CD8-positive, alpha-beta T cell (primary cell): ENCODE measurements at regions of chr6 and their contacts with region 1.

Region 1: DNA sequence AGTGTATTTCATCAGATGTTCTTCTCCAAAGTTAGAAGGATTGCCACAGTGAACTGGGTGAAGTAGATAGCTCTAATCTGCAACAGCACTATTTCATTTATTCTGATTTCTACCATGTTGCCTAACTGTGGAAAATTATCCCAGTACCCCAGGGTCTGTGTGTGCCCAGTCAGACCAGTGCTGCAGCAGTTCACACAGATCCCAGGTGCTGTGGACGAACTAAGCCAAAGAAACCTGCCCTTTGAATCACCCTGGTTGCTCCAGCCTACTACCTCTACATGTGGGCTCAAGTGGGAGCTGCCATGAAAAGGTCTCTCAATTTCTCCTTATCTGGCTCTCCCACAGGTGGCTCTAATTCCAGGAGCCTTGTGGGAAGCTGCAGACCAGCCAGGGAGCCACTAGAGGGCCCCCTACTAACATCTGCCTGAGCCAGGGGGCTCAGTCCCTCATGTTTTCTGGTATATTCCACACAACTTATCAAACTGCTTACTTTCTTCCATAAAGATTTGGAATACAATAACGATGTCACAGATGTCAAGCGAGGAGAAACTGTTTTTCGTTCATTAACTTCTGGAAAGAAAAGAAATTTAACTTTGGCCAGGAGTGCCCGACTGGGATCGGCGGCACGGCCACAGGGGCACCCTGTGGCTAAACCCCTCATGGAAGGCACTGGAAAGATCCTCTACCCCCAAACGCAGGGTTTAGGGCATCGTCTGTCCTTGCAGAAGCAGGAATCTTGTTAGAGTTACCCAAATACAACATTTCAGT is 31.6 kb upstream of the LY86 start:
- DNase-seq: peak in 7 of 9 experiments; percentile 21 to 72 (median 51)
- ATAC-seq: peak; percentile 62
- H3K4me3 ChIP-seq: no peak overlapping the region
- H3K4me3 Mint-ChIP-seq: no peak overlapping the region
- H3K27ac ChIP-seq: no peak overlapping the region
- H3K27ac Mint-ChIP-seq: no peak overlapping the region
- H3K4me1 ChIP-seq: no peaks in the 10 kb centered on the region
- H3K4me1 Mint-ChIP-seq: peaks cover 1% of the 10 kb centered on the region
- H3K27me3 ChIP-seq: no peaks in the 10 kb centered on the region
- H3K27me3 Mint-ChIP-seq: no peaks in the 10 kb centered on the region
- CTCF ChIP-seq: peak; percentile 89

Region 2: DNA sequence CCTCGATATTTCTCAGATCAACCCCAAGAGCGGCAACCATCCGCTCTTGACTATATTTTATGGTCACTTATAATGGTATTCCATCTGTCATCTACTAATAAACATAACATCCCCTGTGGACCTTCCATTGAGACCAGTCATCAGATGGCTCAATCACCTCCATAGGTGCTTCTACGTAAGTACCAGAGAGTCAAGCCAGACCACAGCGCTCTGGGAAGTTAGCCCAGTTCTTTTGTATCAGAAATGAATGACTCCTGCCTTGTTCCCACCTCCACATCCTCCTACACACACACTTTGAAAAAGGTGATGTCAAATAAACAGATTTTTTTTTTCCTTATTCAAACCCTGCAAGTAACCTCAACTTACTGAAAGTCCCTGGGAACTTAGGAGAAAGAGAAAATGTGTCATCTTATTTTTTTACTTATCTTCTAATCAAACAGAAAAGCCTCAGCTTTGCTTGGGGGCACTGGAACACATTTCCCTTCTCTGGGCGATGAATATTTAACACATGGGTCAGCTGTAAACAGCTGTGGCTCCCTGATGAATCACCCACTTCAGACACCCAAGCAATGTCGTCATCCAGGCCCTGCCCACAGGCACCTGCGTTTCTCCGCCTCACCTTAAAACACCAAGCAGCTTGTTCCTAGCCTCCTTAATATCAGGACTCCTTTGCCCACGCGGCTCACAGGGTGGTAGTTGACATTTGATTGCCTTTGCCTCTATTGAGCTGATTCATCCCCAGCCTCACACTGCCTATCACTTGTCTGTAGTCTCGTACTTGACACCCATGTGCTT is 89.8 kb before region 1 on chr6:
- CTCF ChIA-PET with region 1: no interaction called
- POLR2A ChIA-PET with region 1: no interaction called
- intact Hi-C with region 1: no loop called
- DNase-seq: no peak
- ATAC-seq: no peak
- H3K4me3 ChIP-seq: no peak overlapping the region
- H3K4me3 Mint-ChIP-seq: no peak overlapping the region
- H3K27ac ChIP-seq: no peak overlapping the region
- H3K27ac Mint-ChIP-seq: no peak overlapping the region
- H3K4me1 ChIP-seq: no peaks in the 10 kb centered on the region
- H3K4me1 Mint-ChIP-seq: no peaks in the 10 kb centered on the region
- H3K27me3 ChIP-seq: no peaks in the 10 kb centered on the region
- H3K27me3 Mint-ChIP-seq: peaks cover 3% of the 10 kb centered on the region
- CTCF ChIP-seq: no peak

Region 3: GRCh38 chr6:6509284-6509683 is 47.6 kb before region 1 on chr6:
- CTCF ChIA-PET with region 1: no interaction called
- POLR2A ChIA-PET with region 1: no interaction called
- intact Hi-C with region 1: no loop called
- DNase-seq: no peak
- ATAC-seq: no peak
- H3K4me3 ChIP-seq: no peak overlapping the region
- H3K4me3 Mint-ChIP-seq: no peak overlapping the region
- H3K27ac ChIP-seq: no peak overlapping the region
- H3K27ac Mint-ChIP-seq: no peak overlapping the region
- H3K4me1 ChIP-seq: no peaks in the 10 kb centered on the region
- H3K4me1 Mint-ChIP-seq: peaks cover 8% of the 10 kb centered on the region
- H3K27me3 ChIP-seq: no peaks in the 10 kb centered on the region
- H3K27me3 Mint-ChIP-seq: peaks cover 16% of the 10 kb centered on the region
- CTCF ChIP-seq: no peak

Region 4: DNA sequence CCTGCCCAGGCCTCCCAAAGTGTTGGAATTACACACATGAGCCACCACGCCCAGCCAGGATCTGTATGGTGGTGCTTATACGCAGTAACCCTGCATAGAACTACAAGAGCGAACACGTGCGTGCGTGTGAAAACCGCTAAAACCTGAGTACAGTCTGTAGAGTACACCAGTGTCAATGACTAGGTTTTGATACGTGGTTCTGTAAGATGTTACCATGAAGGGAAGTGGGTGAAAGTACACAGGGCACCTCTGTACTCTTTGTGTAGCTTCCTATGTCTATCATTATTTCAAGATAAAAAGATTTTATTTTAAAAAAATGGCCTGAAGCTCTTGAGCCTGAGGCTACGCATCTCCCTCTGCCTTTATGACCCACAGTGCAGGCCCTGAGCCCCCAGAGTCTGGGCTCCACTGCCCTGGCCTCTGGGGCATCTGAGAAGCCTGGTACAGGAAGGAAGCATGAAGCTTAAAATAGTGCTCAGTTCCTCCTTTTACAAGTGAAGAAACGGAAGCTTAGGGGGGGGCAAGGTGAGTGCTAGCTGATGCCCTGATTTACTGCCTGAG is 53.2 kb after region 1 on chr6:
- CTCF ChIA-PET with region 1: no interaction called
- POLR2A ChIA-PET with region 1: no interaction called
- intact Hi-C with region 1: loop called in 1 of 2 experiments (anchors 5 kb)
- DNase-seq: peak in 7 of 9 experiments; percentile 26 to 86 (median 64)
- ATAC-seq: peak; percentile 69
- H3K4me3 ChIP-seq: peak overlapping the region in 1 of 2 experiments; percentile 3
- H3K4me3 Mint-ChIP-seq: peak overlapping the region; percentile 27
- H3K27ac ChIP-seq: peak overlapping the region; percentile 55 to 70
- H3K27ac Mint-ChIP-seq: peak overlapping the region; percentile 96
- H3K4me1 ChIP-seq: peaks cover 67% of the 10 kb centered on the region
- H3K4me1 Mint-ChIP-seq: peaks cover 69% of the 10 kb centered on the region
- H3K27me3 ChIP-seq: no peaks in the 10 kb centered on the region
- H3K27me3 Mint-ChIP-seq: no peaks in the 10 kb centered on the region
- CTCF ChIP-seq: no peak

Region 5: DNA sequence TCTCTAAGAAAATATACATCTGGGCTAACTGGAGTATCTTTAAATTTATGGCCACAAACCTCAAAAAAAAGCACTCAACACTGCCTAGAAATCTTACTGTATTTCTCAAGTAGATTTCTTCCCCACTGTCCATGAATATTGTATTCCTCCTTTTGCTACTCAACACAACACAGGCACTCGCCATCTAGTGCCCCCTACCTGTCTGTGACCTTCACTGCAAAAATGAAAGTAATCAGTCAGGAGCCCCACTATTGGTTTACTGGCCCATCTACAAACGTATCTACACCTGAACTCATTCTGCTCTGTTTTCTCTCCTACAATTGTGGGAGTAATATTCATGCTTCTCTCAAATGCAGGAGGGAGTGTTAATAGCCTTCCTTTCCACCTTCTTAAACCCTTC is 89.9 kb after region 1 on chr6:
- CTCF ChIA-PET with region 1: interaction called, 5 read pairs
- POLR2A ChIA-PET with region 1: no interaction called
- intact Hi-C with region 1: loop called in 1 of 2 experiments (anchors 2 kb)
- DNase-seq: no peak
- ATAC-seq: no peak
- H3K4me3 ChIP-seq: no peak overlapping the region
- H3K4me3 Mint-ChIP-seq: no peak overlapping the region
- H3K27ac ChIP-seq: no peak overlapping the region
- H3K27ac Mint-ChIP-seq: no peak overlapping the region
- H3K4me1 ChIP-seq: no peaks in the 10 kb centered on the region
- H3K4me1 Mint-ChIP-seq: peaks cover 5% of the 10 kb centered on the region
- H3K27me3 ChIP-seq: no peaks in the 10 kb centered on the region
- H3K27me3 Mint-ChIP-seq: no peaks in the 10 kb centered on the region
- CTCF ChIP-seq: no peak

Region 6: GRCh38 chr6:6661684-6662083 is 104.8 kb after region 1 on chr6:
- CTCF ChIA-PET with region 1: interaction called, 7 read pairs
- POLR2A ChIA-PET with region 1: no interaction called
- intact Hi-C with region 1: loop called in 1 of 2 experiments (anchors 5 kb)
- DNase-seq: no peak
- ATAC-seq: no peak
- H3K4me3 ChIP-seq: no peak overlapping the region
- H3K4me3 Mint-ChIP-seq: no peak overlapping the region
- H3K27ac ChIP-seq: no peak overlapping the region
- H3K27ac Mint-ChIP-seq: no peak overlapping the region
- H3K4me1 ChIP-seq: peaks cover 34% of the 10 kb centered on the region
- H3K4me1 Mint-ChIP-seq: peaks cover 56% of the 10 kb centered on the region
- H3K27me3 ChIP-seq: no peaks in the 10 kb centered on the region
- H3K27me3 Mint-ChIP-seq: no peaks in the 10 kb centered on the region
- CTCF ChIP-seq: no peak

Region 7: GRCh38 chr6:7615611-7616383 is 1058.9 kb after region 1 on chr6:
- CTCF ChIA-PET with region 1: no interaction called
- POLR2A ChIA-PET with region 1: no interaction called
- intact Hi-C with region 1: loop called in 1 of 2 experiments (anchors 5 kb)
- DNase-seq: peak in 5 of 9 experiments; percentile 25 to 65 (median 32)
- ATAC-seq: peak; percentile 52
- H3K4me3 ChIP-seq: no peak overlapping the region
- H3K4me3 Mint-ChIP-seq: peak overlapping the region; percentile 8
- H3K27ac ChIP-seq: no peak overlapping the region
- H3K27ac Mint-ChIP-seq: peak overlapping the region; percentile 0
- H3K4me1 ChIP-seq: peaks cover 7% of the 10 kb centered on the region
- H3K4me1 Mint-ChIP-seq: peaks cover 11% of the 10 kb centered on the region
- H3K27me3 ChIP-seq: no peaks in the 10 kb centered on the region
- H3K27me3 Mint-ChIP-seq: peaks cover 2% of the 10 kb centered on the region
- CTCF ChIP-seq: peak; percentile 85